Activated naive CD4-positive, alpha-beta T cell treated with anti-CD3 and anti-CD28 coated beads for 36 hours (primary cell): ENCODE measurements at regions of chr1 and their contacts with region 1.

Region 1: GRCh38 chr1:20932437-20932977 is 145.4 kb upstream of the HP1BP3 start:
- DNase-seq: peak; percentile 72
- H3K4me3 Mint-ChIP-seq: no peak overlapping the region
- H3K27ac Mint-ChIP-seq: peak overlapping the region; percentile 79
- H3K4me1 Mint-ChIP-seq: peaks cover 36% of the 10 kb centered on the region
- H3K27me3 Mint-ChIP-seq: no peaks in the 10 kb centered on the region

Region 2: GRCh38 chr1:20248971-20249612 is 683.4 kb before region 1 on chr1:
- CTCF ChIA-PET with region 1: no interaction called
- intact Hi-C with region 1: loop called (anchors 2 kb)
- DNase-seq: peak; percentile 86
- H3K4me3 Mint-ChIP-seq: peak overlapping the region; percentile 32
- H3K27ac Mint-ChIP-seq: peak overlapping the region; percentile 95
- H3K4me1 Mint-ChIP-seq: peaks cover 25% of the 10 kb centered on the region
- H3K27me3 Mint-ChIP-seq: no peaks in the 10 kb centered on the region

Region 3: DNA sequence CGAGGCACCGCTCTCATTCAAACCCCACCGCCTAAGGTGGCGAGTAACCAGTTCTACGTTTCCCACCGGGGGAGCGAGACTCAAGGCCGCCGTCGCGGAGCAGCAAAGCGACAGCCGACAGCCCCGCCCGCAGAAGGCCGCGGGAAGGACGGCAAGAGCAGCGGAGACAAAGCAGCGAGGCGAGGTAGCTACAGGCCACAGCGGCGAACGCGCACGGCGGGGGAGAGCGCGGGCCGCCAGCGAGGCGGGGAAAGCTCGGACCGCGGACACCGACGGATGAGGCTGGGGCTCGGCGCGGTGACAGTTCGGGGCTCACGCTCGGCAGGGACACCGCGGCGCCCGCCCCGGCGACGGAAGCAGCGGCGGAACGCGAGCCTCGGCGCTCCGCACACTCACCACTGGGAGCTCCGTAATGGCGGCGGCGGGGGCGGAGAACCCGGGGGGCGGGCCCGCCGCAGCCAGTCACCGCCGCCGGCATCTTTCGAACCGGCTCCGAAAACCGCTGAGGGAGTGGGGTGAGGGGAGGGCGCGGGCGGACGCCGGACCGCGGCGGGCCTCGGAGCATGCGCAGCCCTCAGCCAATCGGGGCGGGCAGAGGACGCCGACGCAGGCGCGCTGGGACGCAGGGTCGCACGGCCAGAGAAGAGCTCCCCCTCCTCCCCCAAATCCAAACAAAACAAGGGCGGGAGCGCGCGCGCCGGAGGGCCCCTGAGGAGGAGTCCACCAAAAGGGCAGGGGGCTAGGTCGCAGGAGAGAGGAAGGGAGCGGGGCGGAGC is 146.1 kb before region 1 on chr1:
- CTCF ChIA-PET with region 1: interaction called, 5 read pairs
- intact Hi-C with region 1: loop called (anchors 1 kb)
- DNase-seq: peak; percentile 97
- H3K4me3 Mint-ChIP-seq: peak overlapping the region; percentile 87
- H3K27ac Mint-ChIP-seq: peak overlapping the region; percentile 94
- H3K4me1 Mint-ChIP-seq: peaks cover 32% of the 10 kb centered on the region
- H3K27me3 Mint-ChIP-seq: peaks cover 2% of the 10 kb centered on the region

Region 4: DNA sequence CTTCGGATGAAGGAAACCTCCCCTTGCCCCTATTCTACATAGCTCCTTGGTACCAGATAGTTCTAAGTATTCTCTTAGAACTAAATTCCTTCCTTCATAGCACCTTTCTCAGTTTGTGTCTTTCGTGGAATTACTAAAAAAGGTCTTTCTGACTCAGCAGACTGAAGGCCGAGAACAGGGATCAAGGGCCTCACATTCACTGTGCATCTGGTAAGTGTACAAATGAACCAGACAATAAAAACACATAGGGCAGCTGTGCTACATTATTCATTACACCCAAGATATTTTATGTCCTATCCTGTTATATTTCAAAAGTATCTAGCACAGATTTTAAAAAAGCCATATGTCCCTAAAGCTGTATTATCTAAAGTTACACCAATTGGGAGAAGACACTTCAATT is 82.5 kb before region 1 on chr1:
- CTCF ChIA-PET with region 1: no interaction called
- intact Hi-C with region 1: no loop called
- DNase-seq: no peak
- H3K4me3 Mint-ChIP-seq: no peak overlapping the region
- H3K27ac Mint-ChIP-seq: no peak overlapping the region
- H3K4me1 Mint-ChIP-seq: no peaks in the 10 kb centered on the region
- H3K27me3 Mint-ChIP-seq: no peaks in the 10 kb centered on the region

Region 5: DNA sequence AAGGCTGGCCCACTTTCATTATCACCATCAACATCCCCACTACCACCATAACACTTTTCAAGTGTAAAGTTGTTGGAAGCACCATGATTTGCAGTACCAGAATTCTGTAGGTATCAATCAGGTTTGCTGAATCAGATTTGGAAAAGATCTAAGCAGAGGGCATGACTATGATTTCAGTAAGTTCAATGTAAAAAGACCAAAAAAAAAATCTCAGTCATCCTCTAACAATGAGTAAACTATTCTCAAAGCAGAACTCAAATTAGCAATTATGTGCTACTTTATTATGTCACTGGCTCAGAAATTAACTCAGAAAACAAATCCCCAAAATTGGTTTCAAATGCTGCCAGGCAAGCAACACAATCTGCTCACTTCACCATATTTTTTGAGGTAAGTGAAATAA is 42.4 kb after region 1 on chr1:
- CTCF ChIA-PET with region 1: no interaction called
- intact Hi-C with region 1: loop called (anchors 1 kb)
- DNase-seq: no peak
- H3K4me3 Mint-ChIP-seq: no peak overlapping the region
- H3K27ac Mint-ChIP-seq: no peak overlapping the region
- H3K4me1 Mint-ChIP-seq: no peaks in the 10 kb centered on the region
- H3K27me3 Mint-ChIP-seq: no peaks in the 10 kb centered on the region

Region 6: DNA sequence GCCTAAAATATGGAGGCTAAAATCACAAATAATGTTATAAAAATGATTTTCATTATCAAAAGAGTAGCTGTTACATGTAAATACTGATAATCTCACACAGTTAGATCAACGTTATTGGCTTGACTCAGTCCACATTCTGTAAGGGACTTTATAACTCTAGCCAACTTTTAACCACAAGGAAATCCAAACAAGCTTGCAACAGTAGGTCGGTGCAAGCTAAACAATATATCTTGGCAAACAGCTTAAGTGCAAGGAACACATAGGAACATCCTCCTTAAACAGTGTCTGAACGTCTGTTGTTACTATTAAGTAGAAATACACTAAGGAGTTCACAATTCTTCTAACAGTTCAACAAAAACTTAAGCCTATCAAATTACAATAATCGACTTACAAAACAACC is 117.5 kb after region 1 on chr1:
- CTCF ChIA-PET with region 1: no interaction called
- intact Hi-C with region 1: no loop called
- DNase-seq: no peak
- H3K4me3 Mint-ChIP-seq: no peak overlapping the region
- H3K27ac Mint-ChIP-seq: no peak overlapping the region
- H3K4me1 Mint-ChIP-seq: no peaks in the 10 kb centered on the region
- H3K27me3 Mint-ChIP-seq: no peaks in the 10 kb centered on the region

Region 7: GRCh38 chr1:21176586-21177555 is 244.4 kb after region 1 on chr1 and contains the start of gene EIF4G3:
- CTCF ChIA-PET with region 1: interaction called, 5 read pairs
- intact Hi-C with region 1: loop called (anchors 1 kb)
- DNase-seq: peak; percentile 100
- H3K4me3 Mint-ChIP-seq: peak within 1 kb of the TSS; percentile 83
- H3K27ac Mint-ChIP-seq: peak within 1 kb of the TSS; percentile 92
- H3K4me1 Mint-ChIP-seq: peaks cover 24% of the 10 kb centered on the region
- H3K27me3 Mint-ChIP-seq: no peaks in the 10 kb centered on the region
- total RNA-seq, gene EIF4G3: 44.6 to 48.0 TPM

Region 8: GRCh38 chr1:21782868-21783678 is 850.6 kb after region 1 on chr1 and contains the start of gene USP48:
- CTCF ChIA-PET with region 1: no interaction called
- intact Hi-C with region 1: loop called (anchors 1 kb)
- DNase-seq: peak; percentile 97
- H3K4me3 Mint-ChIP-seq: peak within 1 kb of the TSS; percentile 95
- H3K27ac Mint-ChIP-seq: peak within 1 kb of the TSS; percentile 100
- H3K4me1 Mint-ChIP-seq: peaks cover 25% of the 10 kb centered on the region
- H3K27me3 Mint-ChIP-seq: no peaks in the 10 kb centered on the region
- total RNA-seq, gene USP48: 89.9 to 93.4 TPM